CD14-positive monocyte (primary cell): ENCODE measurements at regions of chr10 and their contacts with region 1.

Region 1: GRCh38 chr10:132059760-132060508 is 5.8 kb upstream of the JAKMIP3 start:
- DNase-seq: no peak
- H3K4me3 ChIP-seq: no peak overlapping the region
- H3K4me3 Mint-ChIP-seq: no peak overlapping the region
- H3K27ac ChIP-seq: no peak overlapping the region
- H3K27ac Mint-ChIP-seq: no peak overlapping the region
- H3K4me1 ChIP-seq: no peaks in the 10 kb centered on the region
- H3K4me1 Mint-ChIP-seq: no peaks in the 10 kb centered on the region
- H3K27me3 ChIP-seq: peaks cover 0 to 4% of the 10 kb centered on the region in 2 donors
- H3K27me3 Mint-ChIP-seq: peaks cover 8 to 19% (median 12%) of the 10 kb centered on the region in 3 donors
- CTCF ChIP-seq: no peak

Region 2: GRCh38 chr10:131667047-131667446 is 392.9 kb before region 1 on chr10:
- intact Hi-C with region 1: loop called in 1 of 2 experiments (anchors 5 kb)
- DNase-seq: no peak
- H3K4me3 ChIP-seq: no peak overlapping the region
- H3K4me3 Mint-ChIP-seq: no peak overlapping the region
- H3K27ac ChIP-seq: no peak overlapping the region
- H3K27ac Mint-ChIP-seq: no peak overlapping the region
- H3K4me1 ChIP-seq: no peaks in the 10 kb centered on the region
- H3K4me1 Mint-ChIP-seq: no peaks in the 10 kb centered on the region
- H3K27me3 ChIP-seq: no peaks in the 10 kb centered on the region
- H3K27me3 Mint-ChIP-seq: peaks cover 2 to 5% (median 3%) of the 10 kb centered on the region in 3 donors
- CTCF ChIP-seq: no peak

Region 3: GRCh38 chr10:131774681-131775085 is 285.3 kb before region 1 on chr10:
- intact Hi-C with region 1: no loop called
- DNase-seq: no peak
- H3K4me3 ChIP-seq: no peak overlapping the region
- H3K4me3 Mint-ChIP-seq: no peak overlapping the region
- H3K27ac ChIP-seq: no peak overlapping the region
- H3K27ac Mint-ChIP-seq: no peak overlapping the region
- H3K4me1 ChIP-seq: no peaks in the 10 kb centered on the region
- H3K4me1 Mint-ChIP-seq: no peaks in the 10 kb centered on the region
- H3K27me3 ChIP-seq: no peaks in the 10 kb centered on the region
- H3K27me3 Mint-ChIP-seq: peaks cover under 1 to 4% (median 2%) of the 10 kb centered on the region in 3 donors
- CTCF ChIP-seq: no peak